GM12878 (cell line): ENCODE measurements at regions of chr15 and their contacts with region 1.

Region 1: DNA sequence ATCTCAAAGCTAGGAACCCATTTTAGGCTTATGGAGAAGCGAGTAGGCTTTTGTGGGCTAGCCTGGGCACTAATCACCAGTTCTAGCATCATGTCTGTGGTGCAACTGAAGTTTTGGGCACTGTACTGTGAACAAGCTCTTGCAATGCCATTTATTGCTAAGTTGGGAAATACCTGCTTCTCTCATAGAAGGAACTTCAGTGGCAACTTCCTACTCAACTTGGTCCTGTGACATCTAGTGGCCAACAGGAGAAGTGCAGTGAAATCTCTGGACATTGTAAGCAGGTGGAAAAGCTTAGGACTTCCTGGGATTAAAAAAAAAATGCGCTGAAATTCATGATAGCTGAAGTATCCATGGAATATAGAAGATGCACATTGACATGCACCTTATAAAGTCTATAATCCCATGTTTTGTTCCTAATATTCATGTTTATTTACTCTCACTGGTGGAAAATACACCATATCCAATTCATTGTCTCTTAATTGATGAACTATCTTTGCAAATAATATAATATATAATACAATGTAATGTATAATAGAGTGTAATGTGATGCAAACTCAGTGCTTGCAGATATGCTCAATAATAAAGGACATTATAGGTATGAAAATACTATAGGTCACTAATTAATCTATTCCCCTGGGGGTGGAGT is 6.5 kb upstream of the ALDH1A3 start:
- DNase-seq: peak; percentile 39
- ATAC-seq: peak; percentile 87
- H3K4me3 ChIP-seq: no peak overlapping the region
- H3K27ac ChIP-seq: no peak overlapping the region
- H3K4me1 ChIP-seq: no peaks in the 10 kb centered on the region
- H3K27me3 ChIP-seq: peaks cover 3% of the 10 kb centered on the region in 2 experiments; a peak in 3 of 4 replicates
- CTCF ChIP-seq: peak; percentile 80 to 93 (median 89)
- EP300 ChIP-seq: no peak
- POLR2A ChIP-seq: no peak
- RAD21 ChIP-seq: peak; percentile 82

Region 2: GRCh38 chr15:99928429-99928981 is 944.6 kb before region 1 on chr15:
- CTCF ChIA-PET with region 1: no interaction called
- POLR2A ChIA-PET with region 1: no interaction called
- RAD21 ChIA-PET with region 1: no interaction called
- SMC1A ChIA-PET with region 1: no interaction called
- in situ Hi-C with region 1: no loop called
- intact Hi-C with region 1: loop called (anchors 5 kb)
- DNase-seq: peak; percentile 45
- ATAC-seq: peak; percentile 98
- H3K4me3 ChIP-seq: peak overlapping the region; percentile 75
- H3K27ac ChIP-seq: 0 out of 2 replicates have a peak overlapping the region, but pooled peaks have one; percentile 11
- H3K4me1 ChIP-seq: peaks cover 9% of the 10 kb centered on the region
- H3K27me3 ChIP-seq: no peaks in the 10 kb centered on the region; a peak in 2 of 4 replicates
- CTCF ChIP-seq: peak; percentile 53 to 74 (median 62); a peak in 5 of 6 replicates
- EP300 ChIP-seq: no peak
- POLR2A ChIP-seq: no peak; the same call in 1 of the 2 replicates
- RAD21 ChIP-seq: peak; percentile 51

Region 3: GRCh38 chr15:100627789-100628395 is 245.3 kb before region 1 on chr15:
- CTCF ChIA-PET with region 1: interaction called, 24 read pairs
- POLR2A ChIA-PET with region 1: no interaction called
- RAD21 ChIA-PET with region 1: interaction called, 6 read pairs
- SMC1A ChIA-PET with region 1: interaction called, 9 read pairs
- in situ Hi-C with region 1: loop called (anchors 5 kb)
- intact Hi-C with region 1: loop called (anchors 1 kb)
- DNase-seq: peak; percentile 43
- ATAC-seq: peak; percentile 92
- H3K4me3 ChIP-seq: no peak overlapping the region
- H3K27ac ChIP-seq: no peak overlapping the region
- H3K4me1 ChIP-seq: no peaks in the 10 kb centered on the region
- H3K27me3 ChIP-seq: no peaks in the 10 kb centered on the region
- CTCF ChIP-seq: peak; percentile 73 to 86 (median 80); a peak in 5 of 6 replicates
- EP300 ChIP-seq: no peak
- POLR2A ChIP-seq: no peak
- RAD21 ChIP-seq: peak; percentile 73

Region 4: DNA sequence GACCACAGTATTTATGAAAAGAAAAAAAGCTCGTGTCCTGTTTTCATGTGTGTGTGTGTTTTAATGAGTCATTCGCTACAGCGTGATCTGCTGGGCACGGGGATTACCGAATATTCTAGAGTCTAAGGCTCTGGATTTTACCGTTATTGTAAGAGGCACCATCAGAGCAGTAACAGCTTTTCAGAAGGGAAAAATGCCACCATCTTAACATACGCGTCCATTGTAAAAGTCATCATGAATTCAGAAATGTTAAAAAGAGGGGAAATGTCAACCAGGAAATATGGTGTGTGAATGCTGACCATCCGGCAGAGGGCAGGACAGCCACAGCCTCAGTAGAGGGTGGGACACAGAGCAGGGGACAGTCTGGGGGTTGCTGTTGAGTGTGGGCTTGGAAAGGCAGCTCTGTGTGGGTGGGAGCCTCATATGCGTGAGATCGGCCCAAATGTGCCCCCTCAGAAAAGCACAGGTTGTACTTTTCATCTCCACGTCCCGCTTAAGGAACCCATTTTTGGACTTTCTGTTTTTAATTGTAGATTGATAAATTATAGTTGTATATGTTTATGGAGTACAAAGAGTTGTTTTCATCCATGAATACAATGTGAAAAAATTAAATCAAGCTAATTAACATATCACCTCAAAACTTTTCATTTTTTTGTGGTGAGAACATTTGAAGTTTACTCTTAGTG is 201.2 kb before region 1 on chr15:
- CTCF ChIA-PET with region 1: interaction called, 4 read pairs
- POLR2A ChIA-PET with region 1: interaction called, 3 read pairs
- RAD21 ChIA-PET with region 1: no interaction called
- SMC1A ChIA-PET with region 1: interaction called, 3 read pairs
- in situ Hi-C with region 1: no loop called
- intact Hi-C with region 1: loop called (anchors 1 kb)
- DNase-seq: no peak
- ATAC-seq: peak; percentile 82
- H3K4me3 ChIP-seq: no peak overlapping the region
- H3K27ac ChIP-seq: no peak overlapping the region
- H3K4me1 ChIP-seq: no peaks in the 10 kb centered on the region
- H3K27me3 ChIP-seq: no peaks in the 10 kb centered on the region
- CTCF ChIP-seq: peak; percentile 31 to 48 (median 45); a peak in 5 of 6 replicates
- EP300 ChIP-seq: no peak
- POLR2A ChIP-seq: no peak
- RAD21 ChIP-seq: peak; percentile 56

Region 5: GRCh38 chr15:100725101-100725762 is 147.9 kb before region 1 on chr15:
- CTCF ChIA-PET with region 1: no interaction called
- POLR2A ChIA-PET with region 1: no interaction called
- RAD21 ChIA-PET with region 1: no interaction called
- SMC1A ChIA-PET with region 1: no interaction called
- in situ Hi-C with region 1: no loop called
- intact Hi-C with region 1: no loop called
- DNase-seq: no peak
- ATAC-seq: no peak
- H3K4me3 ChIP-seq: no peak overlapping the region
- H3K27ac ChIP-seq: no peak overlapping the region
- H3K4me1 ChIP-seq: no peaks in the 10 kb centered on the region
- H3K27me3 ChIP-seq: no peaks in the 10 kb centered on the region; a peak in 2 of 4 replicates
- CTCF ChIP-seq: no peak
- EP300 ChIP-seq: no peak
- POLR2A ChIP-seq: no peak
- RAD21 ChIP-seq: no peak

Region 6: DNA sequence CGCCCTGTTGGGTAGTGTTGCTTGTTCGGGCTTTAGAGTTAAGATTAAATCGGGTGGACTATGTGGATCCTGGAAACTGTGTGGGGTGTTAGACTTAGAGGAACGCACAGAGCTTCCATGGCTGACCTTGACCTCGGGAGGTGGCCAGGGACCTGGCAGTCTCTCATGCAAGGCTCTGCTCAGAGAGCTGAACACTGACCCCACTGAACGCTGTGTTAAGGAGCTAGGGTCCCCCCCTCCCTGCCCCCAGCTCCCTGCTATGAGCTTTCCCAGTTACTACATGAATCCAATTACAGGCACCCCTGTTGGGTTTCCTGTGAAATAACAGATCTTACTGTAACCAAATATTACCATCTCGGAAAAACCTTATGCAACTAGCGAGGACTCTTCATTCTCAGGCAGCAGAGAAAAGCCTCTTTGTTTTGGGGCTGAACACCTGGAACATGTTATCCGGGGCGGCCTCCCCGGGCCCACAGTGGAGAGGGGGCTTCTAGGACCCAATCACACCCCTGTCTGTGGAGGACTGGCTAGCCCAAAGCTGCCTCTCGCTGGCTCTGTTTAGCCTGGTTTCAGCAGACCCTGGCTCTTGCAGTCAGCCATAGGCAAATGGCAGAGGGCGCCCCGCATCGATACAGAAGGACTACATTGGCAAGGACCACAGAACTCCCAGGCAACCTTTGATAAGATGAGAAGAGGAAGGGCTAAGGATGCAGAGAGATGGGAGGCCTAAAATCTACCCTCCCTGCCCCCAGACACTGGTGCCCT is 19.3 kb before region 1 on chr15:
- CTCF ChIA-PET with region 1: interaction called, 16 read pairs
- POLR2A ChIA-PET with region 1: no interaction called
- RAD21 ChIA-PET with region 1: no interaction called
- SMC1A ChIA-PET with region 1: interaction called, 4 read pairs
- in situ Hi-C with region 1: no loop called
- intact Hi-C with region 1: loop called (anchors 2 kb)
- DNase-seq: no peak
- ATAC-seq: no peak
- H3K4me3 ChIP-seq: no peak overlapping the region
- H3K27ac ChIP-seq: no peak overlapping the region
- H3K4me1 ChIP-seq: no peaks in the 10 kb centered on the region
- H3K27me3 ChIP-seq: peaks cover 0 to 1% of the 10 kb centered on the region in 2 experiments; a peak in 1 of 4 replicates
- CTCF ChIP-seq: no peak
- EP300 ChIP-seq: no peak
- POLR2A ChIP-seq: no peak
- RAD21 ChIP-seq: no peak

Region 7: DNA sequence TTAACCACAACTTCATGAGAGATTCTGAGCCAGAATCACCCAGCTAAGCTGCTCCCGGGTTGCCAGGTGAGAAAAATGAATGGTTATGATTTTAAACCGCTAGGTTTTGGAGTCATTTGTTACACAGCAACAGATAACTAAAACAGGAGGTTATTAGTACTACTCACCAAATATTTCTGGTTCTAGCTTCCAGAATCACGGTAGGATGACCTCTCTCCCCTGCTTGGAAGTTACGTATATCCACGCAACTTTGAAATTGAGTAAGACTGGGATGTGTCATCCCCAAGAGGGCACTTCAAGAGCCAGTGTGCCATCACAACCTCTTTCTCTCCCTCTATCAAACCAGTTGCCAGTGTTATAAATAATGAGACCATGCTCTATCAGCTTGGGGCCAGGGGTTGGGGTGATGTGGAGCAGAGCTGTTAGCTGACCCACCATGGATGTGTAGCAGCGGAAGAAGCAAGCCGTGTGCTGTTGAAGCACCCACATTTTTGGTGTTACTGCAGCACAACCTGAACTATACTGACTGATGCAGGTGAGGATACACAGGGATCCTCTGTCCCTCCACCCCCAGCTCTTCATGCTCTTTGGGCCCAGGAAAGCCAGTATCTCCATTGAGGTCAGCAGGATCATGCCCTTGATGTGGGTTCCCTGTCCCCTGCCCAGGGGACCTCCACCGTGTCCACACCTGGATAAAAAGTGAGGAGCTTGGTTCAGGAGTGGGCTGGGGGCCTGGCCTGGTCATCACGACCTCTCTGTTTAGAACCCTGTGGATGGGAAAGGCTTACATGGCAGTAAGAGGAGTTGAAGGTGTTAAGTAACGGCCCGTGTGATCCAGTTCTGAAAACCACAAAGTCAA is 13.0 kb before region 1 on chr15:
- CTCF ChIA-PET with region 1: interaction called, 16 read pairs
- POLR2A ChIA-PET with region 1: no interaction called
- RAD21 ChIA-PET with region 1: interaction called, 3 read pairs
- SMC1A ChIA-PET with region 1: interaction called, 4 read pairs
- in situ Hi-C with region 1: no loop called
- intact Hi-C with region 1: no loop called
- DNase-seq: no peak
- ATAC-seq: no peak
- H3K4me3 ChIP-seq: no peak overlapping the region
- H3K27ac ChIP-seq: no peak overlapping the region
- H3K4me1 ChIP-seq: no peaks in the 10 kb centered on the region
- H3K27me3 ChIP-seq: peaks cover 0 to 1% of the 10 kb centered on the region in 2 experiments; a peak in 2 of 4 replicates
- CTCF ChIP-seq: no peak
- EP300 ChIP-seq: no peak
- POLR2A ChIP-seq: no peak
- RAD21 ChIP-seq: no peak

Region 8: GRCh38 chr15:100902436-100903167 is 29.4 kb after region 1 on chr15:
- CTCF ChIA-PET with region 1: no interaction called
- POLR2A ChIA-PET with region 1: no interaction called
- RAD21 ChIA-PET with region 1: no interaction called
- SMC1A ChIA-PET with region 1: no interaction called
- in situ Hi-C with region 1: no loop called
- intact Hi-C with region 1: no loop called
- DNase-seq: no peak
- ATAC-seq: no peak
- H3K4me3 ChIP-seq: no peak overlapping the region
- H3K27ac ChIP-seq: no peak overlapping the region
- H3K4me1 ChIP-seq: no peaks in the 10 kb centered on the region
- H3K27me3 ChIP-seq: peaks cover 1 to 5% of the 10 kb centered on the region in 2 experiments; a peak in 1 of 4 replicates
- CTCF ChIP-seq: no peak
- EP300 ChIP-seq: no peak
- POLR2A ChIP-seq: no peak
- RAD21 ChIP-seq: no peak

Region 9: DNA sequence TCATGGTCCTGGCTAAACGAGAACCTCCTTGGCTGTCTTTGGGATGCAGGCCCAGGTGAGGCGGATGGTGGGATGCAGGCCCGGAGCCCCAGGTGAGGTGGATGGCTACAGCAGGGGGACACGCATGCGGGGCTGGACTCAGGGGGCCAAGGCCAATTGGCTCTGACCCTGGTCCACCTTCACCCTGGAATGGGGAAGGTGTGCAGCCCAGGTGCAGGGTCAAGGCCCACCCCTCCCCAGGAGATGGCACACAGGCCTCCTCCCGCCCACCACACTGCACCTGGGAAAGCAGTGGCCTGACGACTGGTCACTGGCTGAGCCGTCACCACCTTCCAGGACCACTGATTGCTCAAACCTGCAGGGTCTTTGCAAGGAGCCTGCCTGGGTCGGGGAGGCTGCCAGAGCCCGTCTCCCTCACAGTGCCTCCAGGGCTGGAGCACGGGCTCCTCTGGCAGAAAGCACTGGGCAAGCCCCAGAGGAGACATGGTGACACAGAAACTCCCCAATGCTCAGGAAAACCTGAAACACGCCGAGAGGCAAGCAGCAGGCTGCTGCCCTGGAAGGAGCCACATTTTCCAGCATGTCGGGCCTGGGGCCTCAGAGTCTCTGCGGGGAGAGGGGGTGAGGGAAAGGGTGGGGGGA is 205.7 kb after region 1 on chr15:
- CTCF ChIA-PET with region 1: no interaction called
- POLR2A ChIA-PET with region 1: no interaction called
- RAD21 ChIA-PET with region 1: no interaction called
- SMC1A ChIA-PET with region 1: no interaction called
- in situ Hi-C with region 1: no loop called
- intact Hi-C with region 1: no loop called
- DNase-seq: no peak
- ATAC-seq: no peak
- H3K4me3 ChIP-seq: no peak overlapping the region
- H3K27ac ChIP-seq: no peak overlapping the region
- H3K4me1 ChIP-seq: no peaks in the 10 kb centered on the region
- H3K27me3 ChIP-seq: no peaks in the 10 kb centered on the region
- CTCF ChIP-seq: no peak
- EP300 ChIP-seq: no peak
- POLR2A ChIP-seq: no peak
- RAD21 ChIP-seq: no peak

Region 10: GRCh38 chr15:101600035-101600434 is 726.9 kb after region 1 on chr15:
- CTCF ChIA-PET with region 1: no interaction called
- POLR2A ChIA-PET with region 1: no interaction called
- RAD21 ChIA-PET with region 1: no interaction called
- SMC1A ChIA-PET with region 1: no interaction called
- in situ Hi-C with region 1: no loop called
- intact Hi-C with region 1: no loop called
- DNase-seq: no peak
- ATAC-seq: no peak
- H3K4me3 ChIP-seq: no peak overlapping the region
- H3K27ac ChIP-seq: no peak overlapping the region
- H3K4me1 ChIP-seq: no peaks in the 10 kb centered on the region
- H3K27me3 ChIP-seq: no peaks in the 10 kb centered on the region; a peak in 1 of 4 replicates
- CTCF ChIP-seq: no peak
- EP300 ChIP-seq: no peak
- POLR2A ChIP-seq: no peak
- RAD21 ChIP-seq: no peak